Ascending aorta (tissue), 2 donors: ENCODE measurements at regions of chr7 and their contacts with region 1.

Region 1: GRCh38 chr7:107743567-107744344 is at the start of gene CBLL1:
- DNase-seq: peak; percentile 85 to 99
- H3K4me3 ChIP-seq: peak within 1 kb of the TSS; percentile 80 to 92
- H3K27ac ChIP-seq: peak within 1 kb of the TSS; percentile 95
- H3K4me1 ChIP-seq: peaks cover 10 to 20% of the 10 kb centered on the region in 2 donors
- H3K27me3 ChIP-seq: no peaks in the 10 kb centered on the region
- CTCF ChIP-seq: peak; percentile 51 to 76 (median 71)
- total RNA-seq, gene CBLL1: 44.1 TPM

Region 2: GRCh38 chr7:106848851-106849442 is 894.8 kb before region 1 on chr7:
- intact Hi-C with region 1: no loop called
- DNase-seq: no peak
- H3K4me3 ChIP-seq: no peak overlapping the region
- H3K27ac ChIP-seq: no peak overlapping the region
- H3K4me1 ChIP-seq: no peaks in the 10 kb centered on the region
- H3K27me3 ChIP-seq: no peaks in the 10 kb centered on the region
- CTCF ChIP-seq: no peak

Region 3: GRCh38 chr7:107044347-107045194 is 699.2 kb before region 1 on chr7 and contains the start of gene PRKAR2B:
- intact Hi-C with region 1: loop called (anchors 5 kb)
- DNase-seq: peak in 1 of 2 donors; percentile 77
- H3K4me3 ChIP-seq: peak within 1 kb of the TSS; percentile 66 to 74
- H3K27ac ChIP-seq: peak within 1 kb of the TSS; percentile 62
- H3K4me1 ChIP-seq: peaks cover 7% of the 10 kb centered on the region in 2 donors
- H3K27me3 ChIP-seq: no peaks in the 10 kb centered on the region
- CTCF ChIP-seq: no peak
- total RNA-seq, gene PRKAR2B: 10.5 TPM

Region 4: GRCh38 chr7:107201795-107202450 is 541.8 kb before region 1 on chr7:
- intact Hi-C with region 1: no loop called
- DNase-seq: no peak
- H3K4me3 ChIP-seq: no peak overlapping the region
- H3K27ac ChIP-seq: no peak overlapping the region
- H3K4me1 ChIP-seq: no peaks in the 10 kb centered on the region
- H3K27me3 ChIP-seq: no peaks in the 10 kb centered on the region
- CTCF ChIP-seq: peak in 2 of 3 experiments; percentile 12 to 61

Region 5: DNA sequence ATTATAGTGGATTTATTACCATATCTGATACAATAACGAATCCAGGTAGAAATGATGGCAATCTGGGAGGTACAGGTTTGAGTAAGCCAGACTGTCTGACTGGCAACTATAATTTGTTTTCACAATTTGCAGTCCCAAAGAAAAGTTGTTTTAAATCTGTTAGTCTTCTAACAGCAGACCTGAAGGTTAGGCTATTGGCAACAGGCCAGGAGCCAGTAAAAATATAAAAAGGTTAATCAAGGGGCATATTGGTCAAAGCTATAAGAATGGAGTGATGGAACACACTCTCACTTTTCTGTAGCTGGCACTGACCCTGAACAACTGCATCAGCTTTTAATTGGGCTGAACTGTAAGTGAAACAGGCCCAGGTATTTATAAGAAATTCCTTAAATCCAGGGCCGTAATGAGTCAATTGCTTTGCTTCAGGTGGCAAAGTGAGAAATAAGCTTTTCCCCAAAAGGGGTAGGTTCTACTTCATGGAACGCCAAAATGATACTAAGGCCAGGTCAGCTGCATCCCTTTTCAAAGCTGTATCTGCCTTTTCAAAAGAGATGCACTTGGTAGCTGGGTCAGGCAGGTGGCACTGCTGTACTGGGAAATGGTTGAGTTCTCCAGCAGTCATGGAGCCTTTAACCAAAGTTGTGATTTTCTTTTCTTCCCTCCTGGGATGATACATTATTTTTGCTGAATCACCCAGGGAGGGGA is 280.9 kb before region 1 on chr7:
- intact Hi-C with region 1: loop called (anchors 5 kb)
- DNase-seq: peak in 1 of 2 donors; percentile 67
- H3K4me3 ChIP-seq: no peak overlapping the region
- H3K27ac ChIP-seq: no peak overlapping the region
- H3K4me1 ChIP-seq: no peaks in the 10 kb centered on the region
- H3K27me3 ChIP-seq: no peaks in the 10 kb centered on the region
- CTCF ChIP-seq: peak; percentile 68 to 84 (median 70)

Region 6: DNA sequence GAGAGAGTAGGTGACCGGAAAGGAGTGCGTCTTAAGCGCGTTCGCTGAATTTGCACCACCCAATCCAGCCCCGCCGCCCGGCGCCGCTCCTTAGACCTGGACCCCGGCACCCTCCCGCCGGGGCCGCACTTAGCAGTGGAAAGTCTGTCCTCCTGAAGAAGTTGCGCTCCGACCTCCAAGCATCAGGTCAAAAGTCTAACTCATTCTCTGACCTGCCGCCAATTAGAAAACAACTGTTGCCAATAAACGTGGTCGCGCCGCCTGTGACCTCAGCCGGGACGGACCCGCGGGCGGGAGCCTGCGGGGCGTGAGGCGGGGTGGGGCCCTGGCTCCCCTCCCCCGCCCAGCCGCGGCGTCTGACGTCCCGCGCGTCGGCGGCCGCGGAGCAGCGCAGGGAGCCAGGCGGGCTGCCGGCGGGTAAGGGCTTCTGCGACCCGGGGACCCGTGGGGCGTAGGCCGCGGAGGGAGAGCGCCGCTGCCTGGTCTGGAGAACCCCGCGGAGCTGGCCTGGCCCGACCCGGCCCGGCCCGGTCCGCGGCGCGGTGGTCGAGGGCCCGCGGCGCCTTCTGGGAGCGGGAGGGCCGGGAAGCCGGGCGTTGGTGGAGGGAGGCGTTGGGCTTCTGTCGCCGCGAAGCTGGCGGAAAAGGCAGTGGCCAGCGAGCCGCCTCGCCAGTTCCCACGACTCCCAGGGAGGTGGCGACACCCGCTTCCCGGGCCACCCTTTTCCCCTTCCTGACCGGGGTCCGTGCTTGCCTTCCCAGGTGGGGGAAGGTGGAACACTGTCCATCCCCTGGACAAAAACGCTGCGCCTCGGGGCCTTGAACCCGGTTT is 163.7 kb before region 1 on chr7 and contains the start of gene BCAP29:
- intact Hi-C with region 1: loop called (anchors 5 kb)
- DNase-seq: peak; percentile 19 to 89
- H3K4me3 ChIP-seq: peak within 1 kb of the TSS; percentile 84 to 91
- H3K27ac ChIP-seq: peak within 1 kb of the TSS; percentile 93 to 97
- H3K4me1 ChIP-seq: peaks cover 0 to 11% of the 10 kb centered on the region in 2 donors
- H3K27me3 ChIP-seq: no peaks in the 10 kb centered on the region
- CTCF ChIP-seq: peak; percentile 22 to 50 (median 29)
- total RNA-seq, gene BCAP29: 73.2 TPM

Region 7: GRCh38 chr7:107879400-107880035 is 135.8 kb after region 1 on chr7:
- intact Hi-C with region 1: loop called (anchors 2 kb)
- DNase-seq: no peak
- H3K4me3 ChIP-seq: no peak overlapping the region
- H3K27ac ChIP-seq: no peak overlapping the region
- H3K4me1 ChIP-seq: no peaks in the 10 kb centered on the region
- H3K27me3 ChIP-seq: no peaks in the 10 kb centered on the region
- CTCF ChIP-seq: peak; percentile 41 to 61 (median 59)

Region 8: GRCh38 chr7:108002726-108003598 is 259.2 kb after region 1 on chr7 and contains the start of gene LAMB1:
- intact Hi-C with region 1: loop called (anchors 10 kb)
- DNase-seq: peak in 1 of 2 donors; percentile 80
- H3K4me3 ChIP-seq: peak within 1 kb of the TSS; percentile 64 to 89
- H3K27ac ChIP-seq: peak within 1 kb of the TSS; percentile 81 to 85
- H3K4me1 ChIP-seq: peaks cover 0 to 17% of the 10 kb centered on the region in 2 donors
- H3K27me3 ChIP-seq: no peaks in the 10 kb centered on the region
- CTCF ChIP-seq: no peak
- total RNA-seq, gene LAMB1: 198 TPM

Region 9: GRCh38 chr7:108135446-108136190 is 391.9 kb after region 1 on chr7:
- intact Hi-C with region 1: no loop called
- DNase-seq: no peak
- H3K4me3 ChIP-seq: no peak overlapping the region
- H3K27ac ChIP-seq: no peak overlapping the region
- H3K4me1 ChIP-seq: no peaks in the 10 kb centered on the region
- H3K27me3 ChIP-seq: no peaks in the 10 kb centered on the region
- CTCF ChIP-seq: no peak